T-cell (primary cell): ENCODE measurements at regions of chr7 and their contacts with region 1.

Region 1: GRCh38 chr7:123941391-123942180 is 16.5 kb downstream of the SPAM1 start:
- DNase-seq: no peak
- ATAC-seq: no peak
- H3K4me3 ChIP-seq: no peak overlapping the region
- H3K4me3 Mint-ChIP-seq: no peak overlapping the region
- H3K27ac ChIP-seq: no peak overlapping the region
- H3K27ac Mint-ChIP-seq: no peak overlapping the region
- H3K4me1 ChIP-seq: no peaks in the 10 kb centered on the region
- H3K4me1 Mint-ChIP-seq: no peaks in the 10 kb centered on the region
- H3K27me3 ChIP-seq: no peaks in the 10 kb centered on the region
- H3K27me3 Mint-ChIP-seq: peaks cover 2 to 10% of the 10 kb centered on the region in 2 donors

Region 2: DNA sequence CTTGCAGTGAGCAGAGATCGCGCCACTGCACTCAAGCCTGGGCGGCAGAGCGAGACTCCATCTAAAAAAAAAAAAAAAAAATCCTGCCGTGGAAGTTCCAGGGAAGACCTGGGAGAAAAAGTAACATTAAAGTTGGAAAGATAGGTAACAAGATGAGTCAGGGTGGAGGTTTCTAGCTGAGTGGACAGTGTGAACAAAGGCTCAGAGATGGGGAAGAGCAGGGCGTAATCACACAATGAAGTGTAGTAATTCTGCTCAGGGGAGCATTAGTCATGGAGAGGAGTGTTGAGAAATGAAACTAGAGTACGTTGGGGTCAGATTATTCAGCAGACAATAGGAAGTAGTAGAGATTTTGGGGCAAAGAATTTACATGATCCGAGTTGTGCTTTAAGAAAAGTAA is 171.2 kb before region 1 on chr7:
- CTCF ChIA-PET with region 1: no interaction called
- POLR2A ChIA-PET with region 1: no interaction called
- DNase-seq: peak in 1 of 35 experiments; percentile 18
- ATAC-seq: no peak
- H3K4me3 ChIP-seq: no peak overlapping the region
- H3K4me3 Mint-ChIP-seq: peak overlapping the region in 1 of 3 donors; percentile 53
- H3K27ac ChIP-seq: no peak overlapping the region
- H3K27ac Mint-ChIP-seq: no peak overlapping the region
- H3K4me1 ChIP-seq: no peaks in the 10 kb centered on the region
- H3K4me1 Mint-ChIP-seq: peaks cover 4 to 5% (median 5%) of the 10 kb centered on the region in 3 donors
- H3K27me3 ChIP-seq: no peaks in the 10 kb centered on the region
- H3K27me3 Mint-ChIP-seq: peaks cover 14 to 21% of the 10 kb centered on the region in 2 donors

Region 3: DNA sequence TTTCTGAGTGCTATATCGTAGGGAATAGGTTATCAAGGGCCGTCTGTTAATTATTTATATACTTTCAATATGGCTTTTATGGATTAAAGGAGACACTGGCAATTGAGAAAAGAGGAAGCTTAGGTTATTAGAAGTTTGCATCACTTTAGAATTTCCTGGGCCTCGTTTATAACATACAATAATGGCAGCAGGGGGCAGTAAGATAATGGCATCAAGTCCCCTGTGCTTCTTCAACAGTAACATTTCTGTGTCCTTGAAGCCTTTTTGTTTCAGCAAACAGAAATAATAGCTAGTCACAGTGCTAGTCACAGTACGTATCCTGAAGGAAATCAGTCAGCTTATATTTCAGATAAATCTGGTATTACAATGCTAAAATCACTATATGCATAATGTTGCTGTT is 25.4 kb after region 1 on chr7:
- CTCF ChIA-PET with region 1: interaction called in 1 of 2 experiments, 11 read pairs
- POLR2A ChIA-PET with region 1: no interaction called
- DNase-seq: no peak
- ATAC-seq: no peak
- H3K4me3 ChIP-seq: no peak overlapping the region
- H3K4me3 Mint-ChIP-seq: no peak overlapping the region
- H3K27ac ChIP-seq: no peak overlapping the region
- H3K27ac Mint-ChIP-seq: no peak overlapping the region
- H3K4me1 ChIP-seq: no peaks in the 10 kb centered on the region
- H3K4me1 Mint-ChIP-seq: no peaks in the 10 kb centered on the region
- H3K27me3 ChIP-seq: no peaks in the 10 kb centered on the region
- H3K27me3 Mint-ChIP-seq: no peaks in the 10 kb centered on the region